Psoas muscle (tissue), 8 donors: ENCODE measurements at regions of chr16 and their contacts with region 1.

Region 1: GRCh38 chr16:24163935-24164334 is 92.2 kb upstream of the CACNG3 start:
- DNase-seq: no peak
- ATAC-seq: no peak
- H3K4me3 ChIP-seq: no peak overlapping the region
- H3K27ac ChIP-seq: no peak overlapping the region
- H3K4me1 ChIP-seq: no peaks in the 10 kb centered on the region
- H3K27me3 ChIP-seq: no peaks in the 10 kb centered on the region
- CTCF ChIP-seq: no peak

Region 2: DNA sequence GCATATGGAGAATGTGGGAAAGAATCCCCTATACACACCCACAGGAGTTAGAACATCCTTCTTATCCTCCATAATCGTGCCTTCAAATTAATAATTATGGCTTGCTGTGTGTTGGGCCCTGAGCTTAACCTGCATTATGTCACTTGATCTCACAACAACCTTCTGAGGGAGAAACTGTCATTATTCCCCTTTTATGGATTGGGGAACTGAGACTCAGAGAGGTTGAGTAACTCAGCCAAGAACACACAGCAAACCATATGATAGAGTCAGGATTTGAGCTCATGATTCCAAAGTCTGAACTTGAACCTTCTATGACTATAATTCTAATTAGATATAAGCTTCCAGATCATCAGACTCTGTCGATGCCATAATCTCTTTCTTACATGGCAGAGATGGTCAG is 22.0 kb before region 1 on chr16:
- intact Hi-C with region 1: loop called in 1 of 2 experiments (anchors 2 kb)
- DNase-seq: no peak
- ATAC-seq: no peak
- H3K4me3 ChIP-seq: no peak overlapping the region
- H3K27ac ChIP-seq: no peak overlapping the region
- H3K4me1 ChIP-seq: no peaks in the 10 kb centered on the region
- H3K27me3 ChIP-seq: peaks cover 0 to 2% (median 0%) of the 10 kb centered on the region in 3 donors
- CTCF ChIP-seq: no peak

Region 3: DNA sequence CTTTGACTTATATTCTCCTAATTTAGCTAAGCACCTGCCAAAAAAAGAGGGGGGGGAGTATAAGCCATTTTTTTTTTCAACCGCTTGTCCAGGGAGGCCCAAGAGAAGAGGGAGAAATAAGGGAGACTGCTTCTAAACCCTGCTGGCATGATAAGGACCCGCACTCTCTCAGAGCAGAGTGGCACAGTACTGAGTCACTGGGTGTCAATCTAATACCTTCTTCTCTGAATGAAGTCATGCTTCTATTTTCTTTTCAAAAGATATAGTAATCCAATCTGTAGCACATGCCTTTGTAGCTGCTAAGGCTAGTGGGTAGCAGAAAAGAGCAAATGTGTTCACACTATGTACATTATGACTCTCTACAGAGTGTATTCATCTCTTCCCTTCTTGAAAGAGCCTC is 57.3 kb after region 1 on chr16:
- intact Hi-C with region 1: loop called in 1 of 2 experiments (anchors 10 kb)
- DNase-seq: no peak
- ATAC-seq: no peak
- H3K4me3 ChIP-seq: no peak overlapping the region
- H3K27ac ChIP-seq: no peak overlapping the region
- H3K4me1 ChIP-seq: no peaks in the 10 kb centered on the region
- H3K27me3 ChIP-seq: no peaks in the 10 kb centered on the region
- CTCF ChIP-seq: no peak